ENCODE measurements at regions of chr5 and their contacts with region 1.

Region 1: GRCh38 chr5:103562453-103563157 is at the start of gene NUDT12:
- DNase-seq: peak; percentile 70 to 86
- ATAC-seq: peak; percentile 91 to 96 (median 94)
- H3K4me3 ChIP-seq: peak within 1 kb of the TSS; percentile 81
- H3K27ac ChIP-seq: peak within 1 kb of the TSS; percentile 91
- H3K4me1 ChIP-seq: peaks cover 22% of the 10 kb centered on the region
- H3K27me3 ChIP-seq: no peaks in the 10 kb centered on the region
- CTCF ChIP-seq: no peak
- total RNA-seq, gene NUDT12: 7.6 to 12.6 (median 11.2) TPM

Region 2: GRCh38 chr5:103498800-103499551 is 63.6 kb before region 1 on chr5:
- intact Hi-C with region 1: loop called in 1 of 2 experiments (anchors 1 kb)
- DNase-seq: no peak
- ATAC-seq: peak in 2 of 4 donors; percentile 38 to 39
- H3K4me3 ChIP-seq: peak overlapping the region; percentile 40
- H3K27ac ChIP-seq: peak overlapping the region; percentile 80
- H3K4me1 ChIP-seq: peaks cover 25% of the 10 kb centered on the region
- H3K27me3 ChIP-seq: no peaks in the 10 kb centered on the region
- CTCF ChIP-seq: no peak

Region 3: DNA sequence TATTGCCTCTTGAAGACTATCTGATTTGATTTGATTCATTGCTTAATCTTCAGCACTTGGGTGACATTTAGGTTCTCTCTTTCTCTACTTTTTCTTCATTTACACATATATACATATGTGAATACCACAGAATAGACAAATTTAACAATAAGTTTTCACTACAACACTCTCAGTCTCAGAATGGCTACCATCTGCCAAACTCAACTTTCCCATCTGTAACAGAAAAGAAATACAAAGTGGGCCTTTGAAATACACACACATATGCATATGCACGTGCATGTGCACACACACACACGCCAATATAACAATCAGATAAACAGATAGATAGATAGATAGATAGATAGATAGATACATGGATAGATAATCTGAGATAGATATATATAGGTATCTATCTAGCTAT is 762.8 kb after region 1 on chr5:
- intact Hi-C with region 1: no loop called
- DNase-seq: no peak
- ATAC-seq: no peak
- H3K4me3 ChIP-seq: no peak overlapping the region
- H3K27ac ChIP-seq: no peak overlapping the region
- H3K4me1 ChIP-seq: no peaks in the 10 kb centered on the region
- H3K27me3 ChIP-seq: no peaks in the 10 kb centered on the region
- CTCF ChIP-seq: no peak

Region 4: DNA sequence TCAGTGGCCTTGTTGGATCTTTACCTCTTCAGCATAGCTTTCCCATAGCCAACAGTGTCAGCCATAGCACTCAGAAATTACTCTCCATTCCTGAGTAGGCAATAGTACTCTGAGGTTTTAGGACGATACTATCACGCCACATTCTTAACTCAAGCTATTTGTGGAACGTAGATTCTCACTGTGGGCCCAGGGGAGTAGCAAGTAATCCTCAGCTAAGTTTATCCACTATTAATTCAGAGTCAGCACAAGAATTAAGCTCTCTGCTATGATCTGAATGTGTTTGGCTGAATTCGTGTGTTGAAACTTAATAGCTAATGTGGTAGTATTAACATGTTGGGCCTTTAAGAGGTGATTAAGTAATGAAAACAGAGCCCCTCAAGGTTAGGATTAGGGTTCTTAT is 858.8 kb after region 1 on chr5:
- intact Hi-C with region 1: no loop called
- DNase-seq: no peak
- ATAC-seq: peak in 1 of 4 donors; percentile 42
- H3K4me3 ChIP-seq: no peak overlapping the region
- H3K27ac ChIP-seq: no peak overlapping the region
- H3K4me1 ChIP-seq: no peaks in the 10 kb centered on the region
- H3K27me3 ChIP-seq: no peaks in the 10 kb centered on the region
- CTCF ChIP-seq: no peak